Activated naive CD4-positive, alpha-beta T cell treated with anti-CD3 and anti-CD28 coated beads for 36 hours (primary cell): ENCODE measurements at regions of chr11 and their contacts with region 1.

Region 1: GRCh38 chr11:45079943-45080719 is 66.3 kb upstream of the PRDM11 start:
- DNase-seq: peak; percentile 82
- H3K4me3 Mint-ChIP-seq: peak overlapping the region; percentile 33
- H3K27ac Mint-ChIP-seq: peak overlapping the region; percentile 86
- H3K4me1 Mint-ChIP-seq: peaks cover 40% of the 10 kb centered on the region
- H3K27me3 Mint-ChIP-seq: no peaks in the 10 kb centered on the region

Region 2: GRCh38 chr11:44950625-44951476 is 129.3 kb before region 1 on chr11 and contains the start of gene TP53I11:
- CTCF ChIA-PET with region 1: no interaction called
- intact Hi-C with region 1: loop called (anchors 5 kb)
- DNase-seq: peak; percentile 71
- H3K4me3 Mint-ChIP-seq: peak within 1 kb of the TSS; percentile 73
- H3K27ac Mint-ChIP-seq: no peak within 1 kb of the TSS
- H3K4me1 Mint-ChIP-seq: peaks cover 8% of the 10 kb centered on the region
- H3K27me3 Mint-ChIP-seq: peaks cover 2% of the 10 kb centered on the region
- total RNA-seq, gene TP53I11: 10.3 to 14.0 TPM